MCF 10A (cell line): ENCODE measurements at regions of chr4 and their contacts with region 1.

Region 1: GRCh38 chr4:113394730-113395530 is 345.5 kb downstream of the ANK2 start:
- DNase-seq: peak; percentile 90
- H3K4me3 Mint-ChIP-seq: no peak overlapping the region
- H3K27ac Mint-ChIP-seq: peak overlapping the region; percentile 90
- H3K4me1 Mint-ChIP-seq: no peaks in the 10 kb centered on the region
- H3K27me3 Mint-ChIP-seq: no peaks in the 10 kb centered on the region
- CTCF ChIP-seq: peak; percentile 76

Region 2: GRCh38 chr4:113292371-113293042 is 102.4 kb before region 1 on chr4:
- CTCF ChIA-PET with region 1: interaction called, 3 read pairs
- POLR2A ChIA-PET with region 1: no interaction called
- intact Hi-C with region 1: loop called (anchors 5 kb)
- DNase-seq: no peak
- H3K4me3 Mint-ChIP-seq: no peak overlapping the region
- H3K27ac Mint-ChIP-seq: no peak overlapping the region
- H3K4me1 Mint-ChIP-seq: no peaks in the 10 kb centered on the region
- H3K27me3 Mint-ChIP-seq: no peaks in the 10 kb centered on the region
- CTCF ChIP-seq: no peak

Region 3: DNA sequence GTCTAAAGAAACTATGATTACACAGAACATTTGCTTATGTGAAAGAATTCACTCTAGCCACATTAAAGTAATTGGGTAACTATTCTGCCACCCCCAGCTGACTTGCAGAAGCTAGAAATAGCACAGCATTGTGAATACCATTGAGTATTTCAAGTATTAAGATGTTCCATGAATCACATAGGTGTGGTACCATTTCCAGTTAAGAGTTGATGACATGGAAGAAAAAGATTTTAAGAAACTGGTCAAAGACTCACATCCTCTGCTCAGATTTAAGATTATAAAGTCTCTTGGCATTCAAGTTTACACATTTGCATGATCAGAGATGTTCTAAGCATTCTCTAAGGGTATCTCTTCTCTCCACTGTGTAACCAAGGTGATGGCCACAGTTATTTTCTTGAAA is 79.1 kb after region 1 on chr4:
- CTCF ChIA-PET with region 1: interaction called, 13 read pairs
- POLR2A ChIA-PET with region 1: interaction called, 13 read pairs
- intact Hi-C with region 1: loop called (anchors 5 kb)
- DNase-seq: peak; percentile 59
- H3K4me3 Mint-ChIP-seq: no peak overlapping the region
- H3K27ac Mint-ChIP-seq: peak overlapping the region; percentile 93
- H3K4me1 Mint-ChIP-seq: peaks cover 24% of the 10 kb centered on the region
- H3K27me3 Mint-ChIP-seq: no peaks in the 10 kb centered on the region
- CTCF ChIP-seq: no peak

Region 4: GRCh38 chr4:113761620-113762185 is 366.8 kb after region 1 on chr4 and contains the start of gene CAMK2D:
- CTCF ChIA-PET with region 1: interaction called, 10 read pairs
- POLR2A ChIA-PET with region 1: interaction called, 16 read pairs
- intact Hi-C with region 1: loop called (anchors 1 kb)
- DNase-seq: peak; percentile 89
- H3K4me3 Mint-ChIP-seq: peak within 1 kb of the TSS; percentile 99
- H3K27ac Mint-ChIP-seq: peak within 1 kb of the TSS; percentile 96
- H3K4me1 Mint-ChIP-seq: peaks cover 13% of the 10 kb centered on the region
- H3K27me3 Mint-ChIP-seq: no peaks in the 10 kb centered on the region
- CTCF ChIP-seq: no peak
- total RNA-seq, gene CAMK2D: 32.1 and 55.1 TPM in 2 replicates

Region 5: DNA sequence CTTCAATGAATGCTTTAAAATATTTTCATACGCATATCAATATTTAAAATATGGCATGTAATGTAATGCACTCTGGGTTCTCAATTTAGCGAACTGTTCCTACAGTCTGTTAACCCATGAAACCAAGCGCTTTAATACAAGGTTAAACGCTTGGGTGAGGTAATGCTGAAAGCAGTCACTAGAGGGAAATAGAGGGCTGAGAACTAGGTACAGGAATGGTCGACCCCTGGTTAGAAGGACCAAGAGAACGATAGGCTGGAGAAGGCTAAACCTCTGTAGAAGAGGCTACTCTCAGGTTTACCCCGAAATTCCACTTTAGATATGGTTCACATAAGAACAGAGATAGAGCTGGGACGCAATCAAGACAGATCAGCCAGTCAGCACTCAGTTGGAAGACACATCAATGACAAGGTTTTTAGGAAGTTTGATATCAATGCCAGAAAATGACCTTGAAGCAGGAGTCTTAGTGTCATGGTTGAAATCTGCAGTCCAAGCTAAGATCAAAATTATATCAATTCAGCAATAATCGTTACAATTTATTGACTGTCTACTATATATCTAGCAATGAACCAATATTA is 557.6 kb after region 1 on chr4:
- CTCF ChIA-PET with region 1: interaction called, 3 read pairs
- POLR2A ChIA-PET with region 1: no interaction called
- intact Hi-C with region 1: loop called (anchors 10 kb)
- DNase-seq: peak; percentile 64
- H3K4me3 Mint-ChIP-seq: no peak overlapping the region
- H3K27ac Mint-ChIP-seq: no peak overlapping the region
- H3K4me1 Mint-ChIP-seq: peaks cover 37% of the 10 kb centered on the region
- H3K27me3 Mint-ChIP-seq: no peaks in the 10 kb centered on the region
- CTCF ChIP-seq: peak; percentile 73

Region 6: GRCh38 chr4:114386637-114387233 is 991.8 kb after region 1 on chr4:
- CTCF ChIA-PET with region 1: interaction called, 38 read pairs
- POLR2A ChIA-PET with region 1: no interaction called
- intact Hi-C with region 1: loop called (anchors 1 kb)
- DNase-seq: peak; percentile 56
- H3K4me3 Mint-ChIP-seq: no peak overlapping the region
- H3K27ac Mint-ChIP-seq: no peak overlapping the region
- H3K4me1 Mint-ChIP-seq: no peaks in the 10 kb centered on the region
- H3K27me3 Mint-ChIP-seq: peaks cover 36% of the 10 kb centered on the region
- CTCF ChIP-seq: peak; percentile 70